MCF 10A (cell line): ENCODE measurements at regions of chr2 and their contacts with region 1.

Region 1: DNA sequence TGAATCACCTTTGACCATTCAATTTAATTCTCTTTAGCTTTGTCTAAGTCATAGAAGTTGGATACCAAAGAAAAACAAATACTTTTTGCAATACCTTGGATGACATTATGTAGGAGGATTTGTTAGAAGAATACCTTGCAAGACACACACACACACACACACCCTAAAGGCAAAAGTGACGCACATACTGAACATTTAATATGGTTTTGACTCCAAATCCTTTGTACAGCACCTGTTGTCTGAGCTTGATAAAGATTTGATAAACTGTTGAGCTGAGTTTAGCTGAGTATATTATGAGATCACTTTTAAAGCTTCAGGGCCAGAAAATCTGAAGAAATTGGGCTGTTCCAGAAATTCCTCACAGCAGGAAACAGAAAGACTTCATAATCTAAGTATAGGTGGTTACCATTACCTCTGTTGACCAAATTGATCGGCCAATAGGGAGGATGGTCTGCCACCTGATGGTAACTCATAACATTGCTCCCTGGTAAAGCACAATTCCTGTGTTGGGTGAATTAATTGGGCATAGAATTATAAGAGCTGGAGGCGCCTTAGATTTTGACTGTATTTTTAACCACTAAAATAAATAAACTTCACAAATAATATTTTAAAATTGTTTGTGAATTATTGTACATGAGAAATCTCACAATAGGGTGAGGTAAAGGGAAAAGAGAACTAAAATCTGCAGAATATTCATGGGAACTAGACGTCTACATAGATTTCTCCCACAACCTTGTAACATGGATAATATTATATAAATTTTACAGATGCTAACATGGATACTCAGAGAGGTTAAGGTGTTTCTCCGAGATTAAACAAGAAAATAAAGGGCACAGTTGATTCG is 21.9 kb upstream of the RPIA start:
- DNase-seq: peak; percentile 62
- H3K4me3 Mint-ChIP-seq: no peak overlapping the region
- H3K27ac Mint-ChIP-seq: no peak overlapping the region
- H3K4me1 Mint-ChIP-seq: no peaks in the 10 kb centered on the region
- H3K27me3 Mint-ChIP-seq: no peaks in the 10 kb centered on the region
- CTCF ChIP-seq: peak; percentile 65

Region 2: DNA sequence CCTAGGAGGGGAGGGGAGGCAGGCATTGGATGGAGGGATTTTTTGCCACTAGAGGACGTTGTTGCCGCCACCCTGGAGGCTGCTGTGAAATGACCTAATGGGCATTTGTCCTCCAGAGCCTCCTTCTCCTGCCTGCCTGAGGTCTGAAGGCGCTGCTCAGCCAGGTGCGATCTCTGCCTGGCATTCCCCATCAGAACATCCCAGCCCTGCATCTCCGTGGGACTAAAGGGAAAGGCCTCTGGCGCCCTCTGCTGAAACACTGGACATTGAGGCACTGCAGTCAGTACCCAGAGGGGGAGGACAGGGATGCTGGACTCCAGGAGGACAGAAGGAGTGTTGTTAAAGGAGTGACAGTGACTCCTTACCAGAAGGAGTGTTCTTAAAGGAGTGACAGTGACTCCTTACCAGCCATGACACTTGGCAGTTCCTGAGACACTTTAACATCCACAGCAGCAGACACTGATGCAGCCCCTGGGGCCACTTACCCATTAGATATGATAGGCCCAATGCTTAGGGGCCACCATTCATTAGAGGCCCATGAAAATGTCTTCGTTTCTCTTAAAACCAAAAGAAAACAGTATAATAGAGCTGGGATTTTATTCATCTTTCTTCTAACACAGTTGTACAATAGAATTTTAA is 482.4 kb before region 1 on chr2:
- CTCF ChIA-PET with region 1: interaction called, 11 read pairs
- POLR2A ChIA-PET with region 1: no interaction called
- intact Hi-C with region 1: loop called (anchors 5 kb)
- DNase-seq: peak; percentile 80
- H3K4me3 Mint-ChIP-seq: no peak overlapping the region
- H3K27ac Mint-ChIP-seq: no peak overlapping the region
- H3K4me1 Mint-ChIP-seq: peaks cover 8% of the 10 kb centered on the region
- H3K27me3 Mint-ChIP-seq: no peaks in the 10 kb centered on the region
- CTCF ChIP-seq: peak; percentile 74

Region 3: GRCh38 chr2:88582030-88582429 is 87.6 kb before region 1 on chr2:
- CTCF ChIA-PET with region 1: interaction called, 424 read pairs
- POLR2A ChIA-PET with region 1: interaction called, 5 read pairs
- intact Hi-C with region 1: no loop called
- DNase-seq: no peak
- H3K4me3 Mint-ChIP-seq: no peak overlapping the region
- H3K27ac Mint-ChIP-seq: no peak overlapping the region
- H3K4me1 Mint-ChIP-seq: no peaks in the 10 kb centered on the region
- H3K27me3 Mint-ChIP-seq: no peaks in the 10 kb centered on the region
- CTCF ChIP-seq: no peak

Region 4: DNA sequence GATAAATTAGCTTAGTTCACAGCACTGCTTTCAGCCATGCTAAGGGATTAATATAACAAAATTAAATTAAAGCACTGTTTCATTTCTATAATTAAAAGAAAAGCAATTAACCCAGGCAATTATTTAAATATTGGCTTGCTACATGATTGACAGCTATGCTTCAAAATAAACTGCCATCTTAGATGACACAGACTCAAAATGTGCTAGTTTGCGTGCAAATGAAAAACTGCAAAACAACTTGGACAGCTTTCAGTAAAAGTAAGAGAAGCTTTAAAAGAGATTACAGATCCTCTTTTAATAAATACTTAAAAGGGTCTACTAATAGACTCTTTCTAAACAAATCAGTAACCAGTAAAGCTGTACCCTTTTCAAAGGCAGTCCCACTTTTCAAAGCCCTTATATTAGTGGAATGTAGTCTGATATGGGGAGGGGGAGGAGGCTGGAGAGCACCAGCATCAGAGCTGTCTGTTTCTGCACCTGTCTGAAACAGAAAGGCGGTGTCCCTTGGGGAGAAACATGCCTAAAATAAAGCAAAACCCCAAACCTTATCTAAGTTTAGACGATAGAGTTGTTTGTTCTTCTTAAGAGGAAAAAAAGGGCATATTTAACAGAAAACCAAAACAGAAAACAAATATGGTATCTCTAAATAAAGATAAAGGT is 63.1 kb before region 1 on chr2:
- CTCF ChIA-PET with region 1: interaction called, 88 read pairs
- POLR2A ChIA-PET with region 1: interaction called, 8 read pairs
- intact Hi-C with region 1: no loop called
- DNase-seq: no peak
- H3K4me3 Mint-ChIP-seq: no peak overlapping the region
- H3K27ac Mint-ChIP-seq: no peak overlapping the region
- H3K4me1 Mint-ChIP-seq: peaks cover 4% of the 10 kb centered on the region
- H3K27me3 Mint-ChIP-seq: no peaks in the 10 kb centered on the region
- CTCF ChIP-seq: no peak

Region 5: DNA sequence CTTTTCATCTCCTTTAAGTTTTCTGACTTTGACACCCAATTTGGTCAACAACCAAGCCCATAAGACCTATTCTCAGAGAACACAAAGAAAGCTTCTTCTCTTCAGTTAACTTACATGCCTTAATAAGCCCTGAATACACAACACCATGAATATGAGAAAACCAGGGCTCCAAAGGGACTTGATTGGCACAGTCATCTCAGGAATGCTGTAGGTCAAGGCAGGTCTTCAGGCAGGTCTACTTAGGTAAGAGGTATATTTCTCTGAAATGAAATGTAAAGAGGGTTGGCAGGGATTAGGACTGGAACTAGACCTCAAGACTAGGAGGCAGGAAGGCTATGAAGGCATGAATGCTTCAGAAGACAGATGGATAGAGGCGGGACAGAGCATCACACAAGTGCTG is 17.9 kb before region 1 on chr2:
- CTCF ChIA-PET with region 1: interaction called, 54 read pairs
- POLR2A ChIA-PET with region 1: interaction called, 3 read pairs
- intact Hi-C with region 1: no loop called
- DNase-seq: no peak
- H3K4me3 Mint-ChIP-seq: no peak overlapping the region
- H3K27ac Mint-ChIP-seq: no peak overlapping the region
- H3K4me1 Mint-ChIP-seq: no peaks in the 10 kb centered on the region
- H3K27me3 Mint-ChIP-seq: no peaks in the 10 kb centered on the region
- CTCF ChIP-seq: no peak

Region 6: DNA sequence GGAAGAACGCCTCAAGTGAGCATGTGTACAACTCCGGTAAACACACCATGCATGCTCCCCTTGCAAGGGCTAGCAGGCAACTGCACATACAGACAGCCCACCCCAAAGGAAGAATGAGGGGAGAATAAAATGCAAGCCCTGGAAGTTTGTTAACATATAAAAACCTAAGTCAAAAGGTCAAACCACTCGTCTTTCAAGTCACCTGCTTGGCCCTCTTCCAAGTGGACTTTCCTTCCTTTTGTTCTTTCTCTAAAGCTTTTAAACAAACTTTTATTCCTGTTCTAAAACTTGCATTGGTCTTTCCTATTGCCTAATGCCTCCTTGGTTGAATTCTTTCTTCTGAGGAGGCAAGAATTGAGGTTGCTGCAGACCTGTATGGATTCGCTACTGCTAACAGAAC is 16.7 kb after region 1 on chr2:
- CTCF ChIA-PET with region 1: interaction called, 33 read pairs
- POLR2A ChIA-PET with region 1: interaction called, 7 read pairs
- intact Hi-C with region 1: no loop called
- DNase-seq: no peak
- H3K4me3 Mint-ChIP-seq: no peak overlapping the region
- H3K27ac Mint-ChIP-seq: no peak overlapping the region
- H3K4me1 Mint-ChIP-seq: peaks cover 17% of the 10 kb centered on the region
- H3K27me3 Mint-ChIP-seq: no peaks in the 10 kb centered on the region
- CTCF ChIP-seq: no peak